ENCODE measurements at regions of chr10 and their contacts with region 1.

Region 1: DNA sequence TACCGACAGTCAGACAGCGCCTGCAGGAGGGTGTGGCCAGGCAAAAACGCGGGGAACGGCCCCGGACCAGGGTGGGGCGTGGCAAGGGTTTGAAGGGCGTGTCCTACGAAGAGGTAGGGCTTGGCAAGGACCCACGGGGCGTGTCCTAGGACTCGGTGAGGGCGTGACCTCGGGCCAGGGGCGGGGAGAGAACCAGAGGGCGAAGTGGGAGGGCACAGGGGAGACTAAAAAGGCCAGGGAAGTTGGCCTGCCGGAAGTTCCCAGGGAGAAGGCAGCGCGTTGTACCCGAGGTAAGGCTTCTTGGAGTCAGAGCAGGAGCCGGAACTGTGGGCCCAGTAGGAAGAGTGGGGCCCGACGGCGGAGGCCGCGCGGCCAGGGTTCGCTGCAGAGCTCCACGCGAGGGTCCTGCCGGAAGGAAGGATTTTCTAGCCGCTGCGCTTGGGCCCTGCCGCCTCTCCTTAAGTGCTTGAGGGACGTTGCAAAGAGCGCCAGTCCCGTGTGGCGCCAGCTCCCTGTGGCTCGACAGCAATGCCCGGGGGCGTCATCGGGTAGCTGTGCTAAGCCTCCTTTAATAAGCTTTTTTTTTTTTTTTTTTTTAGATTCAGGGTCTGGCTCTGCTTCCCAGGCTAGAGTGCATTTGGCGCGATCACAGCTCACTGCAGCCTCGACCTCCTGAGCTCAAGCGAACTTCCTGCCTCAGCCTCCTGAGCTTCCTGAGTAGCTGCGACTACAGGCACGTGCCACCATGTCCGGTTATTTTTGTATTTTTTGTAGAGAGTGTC is at the start of gene PTER:
- DNase-seq: peak; percentile 100
- H3K4me3 Mint-ChIP-seq: peak within 1 kb of the TSS; percentile 85
- H3K27ac Mint-ChIP-seq: peak within 1 kb of the TSS; percentile 88
- H3K4me1 Mint-ChIP-seq: peaks cover 43% of the 10 kb centered on the region
- H3K27me3 Mint-ChIP-seq: no peaks in the 10 kb centered on the region
- total RNA-seq, gene PTER: 15.0 to 16.7 TPM

Region 2: GRCh38 chr10:15901889-15902288 is 535.1 kb before region 1 on chr10:
- CTCF ChIA-PET with region 1: no interaction called
- intact Hi-C with region 1: loop called (anchors 10 kb)
- DNase-seq: no peak
- H3K4me3 Mint-ChIP-seq: no peak overlapping the region
- H3K27ac Mint-ChIP-seq: no peak overlapping the region
- H3K4me1 Mint-ChIP-seq: no peaks in the 10 kb centered on the region
- H3K27me3 Mint-ChIP-seq: peaks cover 2% of the 10 kb centered on the region

Region 3: GRCh38 chr10:16348891-16349290 is 88.1 kb before region 1 on chr10:
- CTCF ChIA-PET with region 1: no interaction called
- intact Hi-C with region 1: no loop called
- DNase-seq: no peak
- H3K4me3 Mint-ChIP-seq: no peak overlapping the region
- H3K27ac Mint-ChIP-seq: no peak overlapping the region
- H3K4me1 Mint-ChIP-seq: no peaks in the 10 kb centered on the region
- H3K27me3 Mint-ChIP-seq: peaks cover 7% of the 10 kb centered on the region

Region 4: DNA sequence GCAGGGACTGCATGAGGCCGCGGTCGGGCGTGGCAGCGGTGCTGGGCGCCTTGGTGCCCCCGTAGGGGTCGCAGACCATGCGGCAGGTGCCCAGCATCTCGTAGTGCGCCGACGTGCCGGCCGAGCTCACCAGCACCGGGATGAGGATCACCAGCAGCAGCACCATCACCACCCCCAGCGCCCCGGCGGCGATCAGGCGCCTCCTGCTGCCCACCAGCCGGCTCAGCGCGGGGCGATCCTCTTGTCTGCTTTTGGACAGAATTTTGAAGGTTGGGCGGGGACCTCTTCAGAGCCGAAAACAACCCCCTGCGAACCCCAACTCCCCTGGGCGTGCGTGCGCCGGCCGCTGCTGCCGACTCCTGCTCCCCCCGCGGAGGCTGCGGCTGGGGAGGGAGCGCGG is 84.0 kb after region 1 on chr10:
- CTCF ChIA-PET with region 1: no interaction called
- intact Hi-C with region 1: loop called (anchors 1 kb)
- DNase-seq: peak; percentile 56
- H3K4me3 Mint-ChIP-seq: peak overlapping the region; percentile 62
- H3K27ac Mint-ChIP-seq: no peak overlapping the region
- H3K4me1 Mint-ChIP-seq: peaks cover 6% of the 10 kb centered on the region
- H3K27me3 Mint-ChIP-seq: peaks cover 41% of the 10 kb centered on the region

Region 5: GRCh38 chr10:16817125-16818019 is 380.4 kb after region 1 on chr10 and contains the start of gene RSU1:
- CTCF ChIA-PET with region 1: no interaction called
- intact Hi-C with region 1: loop called (anchors 1 kb)
- DNase-seq: peak; percentile 100
- H3K4me3 Mint-ChIP-seq: peak within 1 kb of the TSS; percentile 89
- H3K27ac Mint-ChIP-seq: peak within 1 kb of the TSS; percentile 90
- H3K4me1 Mint-ChIP-seq: peaks cover 23% of the 10 kb centered on the region
- H3K27me3 Mint-ChIP-seq: no peaks in the 10 kb centered on the region
- total RNA-seq, gene RSU1: 43.4 to 45.1 TPM